Right ventricle myocardium superior (tissue), 1 donor: ENCODE measurements at regions of chr6 and their contacts with region 1.

Region 1: GRCh38 chr6:138287144-138287955 is 69.1 kb upstream of the PBOV1 start:
- DNase-seq: no peak
- ATAC-seq: peak; percentile 55

Region 2: DNA sequence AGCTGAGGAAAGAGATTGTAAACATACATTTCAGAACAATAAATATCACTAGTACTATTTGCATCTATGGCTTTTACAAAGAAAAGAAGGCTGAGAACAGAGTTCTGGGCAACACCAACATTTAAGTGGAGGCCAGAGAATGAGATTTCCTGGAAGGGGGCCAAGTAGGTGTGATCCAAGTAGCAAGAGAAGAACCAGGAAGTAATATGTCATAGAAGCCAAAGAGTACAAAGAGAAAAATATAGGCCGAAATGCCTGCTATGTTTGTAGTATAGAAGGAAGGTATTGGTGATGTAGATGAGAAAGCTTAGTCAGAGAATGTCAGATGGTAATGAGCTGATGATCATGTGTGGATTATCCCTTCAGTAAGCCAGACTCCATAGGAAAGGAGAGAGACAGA is 274.7 kb before region 1 on chr6:
- intact Hi-C with region 1: loop called (anchors 10 kb)
- DNase-seq: no peak
- ATAC-seq: no peak

Region 3: GRCh38 chr6:138403801-138404661 is 116.7 kb after region 1 on chr6 and contains the start of gene HEBP2:
- intact Hi-C with region 1: loop called (anchors 10 kb)
- DNase-seq: peak; percentile 96
- ATAC-seq: peak; percentile 96
- total RNA-seq, gene HEBP2: 87.4 TPM